Activated naive CD4-positive, alpha-beta T cell treated with anti-CD3 and anti-CD28 coated beads for 36 hours (primary cell): ENCODE measurements at regions of chr3 and their contacts with region 1.

Region 1: DNA sequence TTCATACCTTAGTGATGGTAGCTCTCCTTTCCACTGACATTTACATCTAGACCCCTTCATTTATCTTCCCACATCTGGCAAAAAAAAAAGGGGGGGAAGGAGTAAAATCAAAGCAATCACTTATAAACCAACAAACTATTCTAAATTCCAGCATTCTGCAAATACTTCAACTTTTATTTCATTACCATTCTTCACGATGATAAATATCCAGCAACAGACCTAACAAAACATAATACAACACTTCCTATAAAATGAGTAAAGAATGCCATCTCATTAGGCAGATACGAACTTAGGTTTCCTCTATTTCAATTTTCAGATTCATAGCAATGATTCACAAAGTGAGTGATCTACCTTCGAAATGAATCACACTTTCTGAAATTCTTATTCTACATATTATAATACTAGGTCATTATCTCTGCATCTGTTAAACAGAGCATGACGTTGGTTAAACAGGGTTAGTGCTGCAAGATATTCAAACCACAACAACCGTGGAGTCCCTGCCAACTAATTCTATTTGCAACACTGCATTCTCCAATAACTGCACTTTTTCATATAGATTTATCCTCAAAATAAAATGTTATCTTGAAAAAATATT is at the start of gene LRRFIP2:
- DNase-seq: peak; percentile 49
- H3K4me3 Mint-ChIP-seq: peak within 1 kb of the TSS; percentile 82
- H3K27ac Mint-ChIP-seq: peak within 1 kb of the TSS; percentile 50
- H3K4me1 Mint-ChIP-seq: peaks cover 43% of the 10 kb centered on the region
- H3K27me3 Mint-ChIP-seq: no peaks in the 10 kb centered on the region
- total RNA-seq, gene LRRFIP2: 13.3 to 15.3 TPM

Region 2: GRCh38 chr3:37163262-37164015 is 11.2 kb before region 1 on chr3:
- CTCF ChIA-PET with region 1: interaction called, 8 read pairs
- intact Hi-C with region 1: loop called (anchors 1 kb)
- DNase-seq: peak; percentile 49
- H3K4me3 Mint-ChIP-seq: no peak overlapping the region
- H3K27ac Mint-ChIP-seq: no peak overlapping the region
- H3K4me1 Mint-ChIP-seq: peaks cover 30% of the 10 kb centered on the region
- H3K27me3 Mint-ChIP-seq: no peaks in the 10 kb centered on the region

Region 3: GRCh38 chr3:37287776-37288175 is 113.1 kb after region 1 on chr3:
- CTCF ChIA-PET with region 1: interaction called, 4 read pairs
- intact Hi-C with region 1: loop called (anchors 5 kb)
- DNase-seq: peak; percentile 5
- H3K4me3 Mint-ChIP-seq: no peak overlapping the region
- H3K27ac Mint-ChIP-seq: peak overlapping the region; percentile 50
- H3K4me1 Mint-ChIP-seq: peaks cover 14% of the 10 kb centered on the region
- H3K27me3 Mint-ChIP-seq: no peaks in the 10 kb centered on the region